Heart left ventricle (tissue), 16 donors: ENCODE measurements at regions of chr17 and their contacts with region 1.

Region 1: DNA sequence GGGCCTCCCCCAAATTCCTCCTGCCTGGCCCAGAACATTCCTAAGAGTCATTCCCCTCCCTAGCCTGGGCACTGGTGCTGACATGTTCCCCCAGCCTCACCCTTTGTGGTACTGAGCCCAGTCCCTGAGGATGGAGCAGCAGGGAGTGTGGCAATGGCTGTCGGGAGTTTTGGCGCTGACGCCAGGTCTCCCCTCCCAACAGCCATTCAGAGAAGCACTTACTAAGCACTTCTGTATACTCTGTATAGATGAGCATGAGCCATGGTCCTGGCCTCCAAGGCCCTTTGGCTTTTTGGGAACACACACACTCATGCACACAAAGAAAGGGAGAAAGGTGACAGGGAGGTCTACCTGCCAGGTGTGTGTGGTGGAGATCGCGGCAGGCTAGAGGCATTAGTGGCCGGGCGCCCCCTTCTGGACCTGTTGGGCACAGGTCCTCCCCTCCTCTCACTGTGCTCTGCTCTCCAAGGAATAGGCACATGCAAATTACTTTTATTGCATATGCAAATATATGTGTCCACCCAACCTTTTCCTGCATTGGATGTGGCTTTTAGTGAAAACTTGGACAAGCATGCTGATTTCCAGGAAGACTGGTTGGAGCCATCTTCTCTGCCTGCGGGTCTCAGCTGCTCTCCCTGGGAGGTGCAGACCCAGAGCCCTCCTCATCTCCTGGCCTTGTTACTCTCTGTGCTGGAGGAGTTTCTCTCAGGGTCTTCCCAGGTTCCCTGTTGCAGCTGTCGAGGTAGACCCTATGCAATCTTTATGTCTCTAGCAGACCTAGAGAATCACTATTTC is 17.4 kb upstream of the C17orf107 start:
- DNase-seq: peak in 3 of 5 donors; percentile 43 to 76 (median 60)
- ATAC-seq: peak; percentile 50 to 78 (median 66)
- H3K4me3 ChIP-seq: no peak overlapping the region
- H3K27ac ChIP-seq: no peak overlapping the region
- H3K4me1 ChIP-seq: peaks cover 0 to 26% (median 0%) of the 10 kb centered on the region in 12 donors
- H3K27me3 ChIP-seq: no peaks in the 10 kb centered on the region
- CTCF ChIP-seq: peak; percentile 69 to 86 (median 76)
- POLR2A ChIP-seq: no peak

Region 2: DNA sequence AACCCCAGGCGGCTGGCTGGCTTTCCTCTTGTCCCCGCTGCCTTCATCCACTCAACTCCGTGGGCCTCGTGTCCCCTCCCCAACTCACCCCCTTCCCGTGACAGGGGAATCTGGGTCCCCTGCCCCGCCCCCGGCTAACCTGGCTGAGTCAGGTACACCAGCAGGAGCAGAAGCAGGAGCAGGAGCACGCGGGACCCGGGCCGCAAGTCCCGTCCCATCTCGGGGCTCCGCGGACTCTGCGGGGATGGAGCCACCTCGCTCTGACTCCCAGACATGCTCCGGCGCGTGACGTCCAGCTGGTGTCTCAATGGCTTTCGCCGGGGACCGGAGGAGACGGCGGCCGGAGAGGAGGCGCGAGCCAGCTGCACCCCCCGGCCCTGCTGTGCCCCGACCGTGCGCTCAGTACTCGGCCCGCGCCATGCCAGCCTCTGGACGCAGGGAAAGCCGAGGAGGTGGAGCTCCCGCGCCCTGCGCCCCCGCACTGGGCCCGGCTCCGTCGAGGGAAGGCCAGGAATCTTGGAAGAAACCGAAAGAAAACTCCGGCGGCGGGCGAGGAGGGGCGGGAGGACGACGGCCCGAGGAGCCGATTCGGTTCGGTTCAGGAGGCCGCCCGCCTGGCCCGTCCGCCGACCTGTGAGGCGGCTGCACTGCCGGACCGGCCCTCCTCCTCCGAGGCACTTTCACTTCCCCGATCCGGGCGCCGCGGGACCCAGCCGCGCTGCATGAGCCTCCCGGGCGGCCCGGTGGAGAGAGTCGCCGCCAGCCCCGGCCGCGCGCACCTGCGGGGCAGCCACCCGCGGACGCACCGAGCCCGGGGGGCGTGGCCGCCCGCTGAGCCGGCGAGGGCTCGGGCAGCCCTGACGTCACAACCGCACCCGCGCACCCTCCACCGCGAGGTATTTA is 142.6 kb before region 1 on chr17 and contains the starts of genes CXCL16 and ZMYND15:
- intact Hi-C with region 1: loop called in 6 of 10 experiments (anchors 5 to 10 kb)
- DNase-seq: peak; percentile 47 to 83 (median 57)
- ATAC-seq: peak in 3 of 4 donors; percentile 63 to 72 (median 63)
- H3K4me3 ChIP-seq: peak within 1 kb of the TSS; percentile 62 to 94 (median 84)
- H3K27ac ChIP-seq: peak within 1 kb of the TSS in 8 of 12 donors; percentile 14 to 77 (median 57)
- H3K4me1 ChIP-seq: peaks cover 0 to 39% (median 10%) of the 10 kb centered on the region in 12 donors
- H3K27me3 ChIP-seq: peaks cover 0 to 30% (median 4%) of the 10 kb centered on the region in 9 donors
- CTCF ChIP-seq: no peak
- POLR2A ChIP-seq: no peak
- total RNA-seq, gene CXCL16: 1.6 to 42.5 (median 4.5) TPM
- total RNA-seq, gene ZMYND15: 0.27 to 2.9 (median 0.44) TPM in 6 of 9 donors, not detected in the others

Region 3: DNA sequence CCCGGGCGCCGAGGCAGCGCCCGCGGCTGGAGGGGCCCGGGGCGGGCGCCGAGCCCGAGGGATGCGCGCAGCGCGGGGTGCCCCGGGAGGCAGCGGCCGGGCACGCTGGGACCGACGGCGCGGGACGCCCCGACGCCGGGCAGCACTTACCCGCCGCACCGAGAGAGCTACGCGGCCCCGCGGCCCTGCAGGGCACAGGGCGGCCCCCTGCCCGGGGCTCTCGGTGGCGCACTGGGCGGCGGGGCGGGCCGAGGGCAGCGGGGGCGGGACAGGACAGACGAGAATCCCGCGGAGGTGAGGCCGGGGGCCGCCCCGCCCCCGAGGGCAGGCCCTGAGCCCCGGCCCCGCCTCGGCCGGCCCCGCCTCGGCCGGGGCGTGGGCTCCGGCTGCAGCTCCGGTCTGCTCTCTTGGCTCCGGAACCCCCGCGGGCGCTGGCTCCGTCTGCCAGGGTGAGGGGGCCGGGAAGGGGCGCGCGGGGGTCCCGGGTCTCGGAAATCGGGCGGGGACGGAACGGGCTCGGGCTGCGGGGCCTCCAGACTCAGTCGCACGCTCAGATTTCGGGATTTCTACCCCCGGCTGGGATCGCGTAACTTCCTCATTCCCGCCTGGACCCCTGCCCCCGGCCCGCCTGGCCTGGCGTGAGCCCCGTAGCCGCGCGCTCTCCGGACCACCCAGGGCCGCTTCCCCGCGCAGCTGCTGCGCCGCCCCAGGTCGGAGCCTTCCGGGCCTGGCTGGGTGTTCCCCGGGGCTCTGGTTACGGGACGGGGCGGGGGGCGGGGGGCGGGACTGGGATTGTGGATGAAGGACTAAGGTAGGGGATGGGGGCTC is 75.0 kb before region 1 on chr17 and contains the start of gene PLD2:
- intact Hi-C with region 1: loop called in 1 of 10 experiments (anchors 5 kb)
- DNase-seq: peak; percentile 89 to 94 (median 90)
- ATAC-seq: peak; percentile 84 to 99 (median 98)
- H3K4me3 ChIP-seq: peak within 1 kb of the TSS; percentile 69 to 100 (median 86)
- H3K27ac ChIP-seq: peak within 1 kb of the TSS; percentile 45 to 92 (median 85)
- H3K4me1 ChIP-seq: peaks cover 6 to 27% (median 16%) of the 10 kb centered on the region in 12 donors
- H3K27me3 ChIP-seq: no peaks in the 10 kb centered on the region
- CTCF ChIP-seq: peak in 1 of 12 donors; percentile 7
- POLR2A ChIP-seq: peak in 1 of 2 donors; percentile 72
- total RNA-seq, gene PLD2: 5.5 to 17.9 (median 8.5) TPM

Region 4: DNA sequence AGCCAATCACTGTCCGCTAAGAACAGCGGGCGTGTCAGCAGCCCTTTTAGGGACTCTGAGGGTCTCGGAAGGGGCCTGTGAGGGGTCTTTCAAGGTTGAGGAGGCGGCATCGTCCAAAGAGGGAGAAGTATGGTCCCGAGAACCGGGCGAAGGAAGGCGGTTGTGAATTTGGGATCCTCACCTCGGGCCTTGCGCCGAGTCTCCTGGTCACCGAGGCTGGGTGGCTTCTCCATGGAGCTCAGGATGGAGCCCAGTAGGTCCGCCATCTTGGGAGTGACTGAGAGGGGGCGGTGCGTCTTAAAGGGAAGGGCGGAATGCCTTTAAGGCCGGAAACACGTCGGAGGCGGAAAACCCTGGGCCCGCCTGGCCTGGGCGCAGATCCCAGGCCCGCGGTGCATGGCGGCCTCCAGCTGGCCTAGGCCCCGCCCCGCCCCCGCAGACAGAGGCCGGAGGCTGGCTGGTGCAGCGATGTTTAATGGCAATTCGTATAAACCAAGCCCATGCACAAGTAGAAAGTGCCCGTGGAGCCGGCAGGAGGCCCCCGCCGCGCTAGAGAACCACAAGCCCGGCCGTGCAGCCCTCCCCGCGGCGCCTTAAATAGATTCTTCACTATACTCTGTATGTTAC is 85.7 kb after region 1 on chr17 and contains the start of gene SPAG7:
- intact Hi-C with region 1: no loop called
- DNase-seq: peak; percentile 95 to 96 (median 95)
- ATAC-seq: peak; percentile 77 to 88 (median 86)
- H3K4me3 ChIP-seq: peak within 1 kb of the TSS; percentile 35 to 83 (median 70)
- H3K27ac ChIP-seq: peak within 1 kb of the TSS; percentile 89 to 99 (median 96)
- H3K4me1 ChIP-seq: peaks cover 0 to 46% (median 31%) of the 10 kb centered on the region in 12 donors
- H3K27me3 ChIP-seq: no peaks in the 10 kb centered on the region
- CTCF ChIP-seq: peak in 6 of 12 donors; percentile 8 to 25 (median 18)
- POLR2A ChIP-seq: peak in 1 of 2 donors; percentile 68
- total RNA-seq, gene SPAG7: 88.7 to 149 (median 125) TPM